ENCODE measurements at regions of chr13 and their contacts with region 1.

Region 1: GRCh38 chr13:49098771-49099512 is 121.2 kb upstream of the MLNR start:
- DNase-seq: peak in 1 of 10 donors; percentile 16

Region 2: DNA sequence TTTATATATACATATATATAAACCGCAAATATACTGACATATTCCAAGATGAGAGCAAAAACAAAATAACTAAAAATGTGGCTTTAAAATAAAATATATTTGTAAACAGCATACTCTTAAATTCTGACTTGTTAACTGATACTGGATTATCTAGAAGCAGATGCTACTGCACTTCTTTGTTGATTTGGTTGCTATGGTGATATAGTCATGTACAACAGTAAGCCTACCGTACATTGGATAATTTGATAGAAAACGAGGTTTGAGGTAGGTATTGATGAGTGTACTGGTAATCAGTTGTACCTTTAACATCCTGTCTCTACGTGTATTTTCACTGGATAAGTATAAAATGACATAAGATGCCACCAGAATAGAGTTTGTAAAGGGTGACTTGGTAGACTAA is 65.8 kb before region 1 on chr13:
- intact Hi-C with region 1: no loop called
- DNase-seq: no peak

Region 3: DNA sequence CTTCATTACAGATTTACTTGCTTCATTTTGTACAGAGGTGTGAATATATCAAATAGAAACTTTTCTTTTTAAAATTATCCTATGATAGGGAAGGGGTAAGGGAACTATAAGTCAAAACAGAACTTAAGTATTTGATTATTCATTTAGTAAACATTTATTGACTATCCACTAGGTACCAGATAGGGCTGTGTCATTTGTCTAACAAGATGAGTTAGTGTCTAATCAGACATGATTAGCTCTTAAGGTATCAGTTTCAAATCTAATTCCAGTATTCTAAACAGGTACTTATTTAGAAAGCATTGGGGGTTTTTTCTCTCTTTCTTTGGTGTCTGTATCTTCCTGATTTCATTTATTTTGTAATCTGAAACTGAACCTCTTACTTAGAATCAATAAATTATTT is 180.9 kb after region 1 on chr13:
- intact Hi-C with region 1: loop called (anchors 2 kb)
- DNase-seq: no peak